ENCODE measurements at regions of chr2 and their contacts with region 1.

Region 1: DNA sequence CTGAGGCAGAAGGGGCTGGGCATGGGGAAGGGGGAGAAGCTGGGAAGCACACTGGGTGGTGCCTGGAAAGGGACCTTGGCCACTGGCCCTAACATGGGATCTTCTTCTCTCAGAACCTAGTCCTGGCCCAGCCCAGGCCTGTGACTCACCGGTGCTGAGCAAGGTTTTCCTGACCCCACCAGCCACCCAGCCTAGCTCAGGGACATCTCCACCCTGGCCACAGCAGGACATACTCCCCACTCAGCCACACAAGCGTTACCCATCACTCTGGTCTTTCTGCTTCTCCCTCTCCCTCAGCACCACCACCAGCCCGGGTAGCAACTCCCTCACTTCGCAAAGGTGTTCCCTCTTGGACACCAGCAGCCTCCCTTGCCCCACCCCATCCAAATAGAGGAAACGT is 22.8 kb downstream of the TNS1 start:
- DNase-seq: peak in 2 of 6 donors; percentile 42 to 52
- ATAC-seq: peak in 2 of 4 donors; percentile 22 to 26
- H3K4me3 ChIP-seq: no peak overlapping the region
- H3K27ac ChIP-seq: no peak overlapping the region
- H3K4me1 ChIP-seq: peaks cover 0 to 8% (median 4%) of the 10 kb centered on the region in 3 donors
- H3K27me3 ChIP-seq: no peaks in the 10 kb centered on the region
- CTCF ChIP-seq: no peak

Region 2: DNA sequence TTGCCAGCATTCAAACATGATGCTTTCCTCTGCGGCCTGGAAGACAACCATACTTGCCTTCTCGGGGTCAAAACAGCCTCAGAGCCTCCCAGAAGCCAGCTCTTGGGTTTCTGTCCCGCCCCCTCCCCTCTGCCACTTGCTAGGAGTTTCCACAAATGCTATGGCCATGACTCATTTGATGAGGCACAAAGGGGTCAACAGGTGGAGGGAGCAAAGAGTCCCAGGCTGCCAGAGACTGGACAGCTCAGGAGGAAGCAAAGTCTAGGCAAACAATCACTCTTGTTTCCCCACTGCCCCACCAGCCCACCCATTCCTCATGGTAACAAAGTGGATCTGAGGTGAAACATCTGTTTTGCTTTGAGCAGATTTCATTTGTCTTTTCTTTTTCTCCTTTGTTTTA is 528.4 kb before region 1 on chr2:
- intact Hi-C with region 1: no loop called
- DNase-seq: no peak
- ATAC-seq: no peak
- H3K4me3 ChIP-seq: no peak overlapping the region
- H3K27ac ChIP-seq: no peak overlapping the region
- H3K4me1 ChIP-seq: no peaks in the 10 kb centered on the region
- H3K27me3 ChIP-seq: no peaks in the 10 kb centered on the region
- CTCF ChIP-seq: no peak

Region 3: DNA sequence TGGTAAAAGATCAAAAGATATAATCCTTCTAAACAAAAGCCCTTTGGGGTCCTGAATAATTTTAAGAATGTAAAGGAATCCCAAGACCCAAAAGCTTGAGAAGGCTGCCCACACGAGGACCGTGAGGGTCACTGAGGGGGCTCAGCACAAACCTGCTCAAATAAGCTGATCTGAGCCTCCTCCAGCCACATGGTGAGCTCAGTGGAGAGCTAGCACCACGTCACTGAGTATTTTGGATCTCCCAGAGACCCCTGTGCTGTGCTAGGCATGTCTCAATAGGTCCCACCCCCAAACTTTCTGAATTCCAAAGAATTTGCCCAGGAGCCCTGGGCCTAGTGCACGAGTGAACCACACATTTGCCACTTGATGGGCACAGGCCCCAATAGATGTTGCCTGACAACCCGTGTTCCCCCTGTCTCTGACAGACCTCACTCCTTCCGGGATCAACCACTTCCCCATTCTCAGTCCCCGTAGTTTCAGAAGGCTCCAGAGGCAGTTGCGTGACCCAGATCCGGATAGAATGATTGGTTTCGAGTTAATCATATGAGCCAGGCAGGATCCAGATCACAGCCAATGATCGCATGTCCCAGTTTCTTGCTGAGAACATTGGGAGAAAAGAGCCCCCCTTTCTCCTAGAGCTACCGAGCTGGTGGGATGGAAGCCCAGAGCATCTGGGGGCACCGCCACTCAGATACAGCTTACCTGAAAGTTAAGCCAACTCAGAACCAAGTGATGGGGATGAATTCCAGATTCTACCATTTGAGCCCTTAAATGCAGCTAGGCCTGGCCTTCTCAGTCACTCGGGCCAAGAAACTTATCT is 181.1 kb before region 1 on chr2:
- intact Hi-C with region 1: no loop called
- DNase-seq: peak in 3 of 6 donors; percentile 2 to 46 (median 9)
- ATAC-seq: peak in 2 of 4 donors; percentile 36 to 54
- H3K4me3 ChIP-seq: no peak overlapping the region
- H3K27ac ChIP-seq: no peak overlapping the region
- H3K4me1 ChIP-seq: peaks cover 0 to 3% (median 0%) of the 10 kb centered on the region in 3 donors
- H3K27me3 ChIP-seq: no peaks in the 10 kb centered on the region
- CTCF ChIP-seq: no peak

Region 4: GRCh38 chr2:217886720-217887309 is 93.2 kb before region 1 on chr2:
- intact Hi-C with region 1: loop called in 1 of 3 experiments (anchors 5 kb)
- DNase-seq: peak in 5 of 6 donors; percentile 52 to 85 (median 76)
- ATAC-seq: peak; percentile 57 to 81 (median 76)
- H3K4me3 ChIP-seq: no peak overlapping the region
- H3K27ac ChIP-seq: no peak overlapping the region
- H3K4me1 ChIP-seq: no peaks in the 10 kb centered on the region
- H3K27me3 ChIP-seq: no peaks in the 10 kb centered on the region
- CTCF ChIP-seq: peak; percentile 58 to 67 (median 59)

Region 5: GRCh38 chr2:218540015-218540414 is 560.0 kb after region 1 on chr2:
- intact Hi-C with region 1: no loop called
- DNase-seq: no peak
- ATAC-seq: no peak
- H3K4me3 ChIP-seq: no peak overlapping the region
- H3K27ac ChIP-seq: no peak overlapping the region
- H3K4me1 ChIP-seq: no peaks in the 10 kb centered on the region
- H3K27me3 ChIP-seq: no peaks in the 10 kb centered on the region
- CTCF ChIP-seq: no peak

Measured in pancreas (tissue), 10 donors.